ENCODE measurements at regions of chr7 and their contacts with region 1.

Region 1: DNA sequence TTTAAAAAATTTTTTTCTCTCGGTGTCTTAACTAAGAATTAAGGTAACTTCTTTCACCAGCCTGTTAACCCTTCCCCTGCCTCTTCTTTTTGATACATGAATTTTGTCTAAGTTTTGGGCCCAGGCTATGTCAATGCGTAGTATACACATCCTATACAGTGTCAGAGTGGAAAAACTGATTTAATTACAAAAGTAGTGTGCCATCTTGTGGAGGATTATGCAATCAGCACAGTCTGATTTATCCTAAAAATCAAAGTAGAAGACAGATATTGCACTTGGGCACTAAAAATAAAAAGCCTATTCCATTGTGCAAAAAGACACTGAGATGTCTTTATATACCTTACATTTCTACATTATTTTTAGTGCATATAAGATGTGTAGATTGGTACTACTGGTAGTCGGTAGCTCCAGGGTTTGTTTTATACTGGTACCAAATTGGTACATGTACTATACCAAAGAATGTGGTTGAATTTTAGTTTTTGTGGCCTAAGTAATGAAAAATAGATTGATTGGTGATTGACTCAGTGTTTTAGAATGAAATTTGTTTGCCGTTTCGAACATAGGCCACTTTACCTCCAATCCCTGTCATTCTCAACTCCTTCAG is 96.6 kb downstream of the MKLN1 start:
- DNase-seq: peak; percentile 75
- H3K4me3 ChIP-seq: no peak overlapping the region
- H3K27ac ChIP-seq: peak overlapping the region; percentile 2; the same call in 1 of the 2 replicates
- H3K4me1 ChIP-seq: no peaks in the 10 kb centered on the region
- H3K27me3 ChIP-seq: no peaks in the 10 kb centered on the region

Region 2: GRCh38 chr7:131090886-131091692 is 333.2 kb before region 1 on chr7:
- in situ Hi-C with region 1: loop called (anchors 10 kb)
- DNase-seq: no peak
- H3K4me3 ChIP-seq: no peak overlapping the region
- H3K27ac ChIP-seq: no peak overlapping the region
- H3K4me1 ChIP-seq: peaks cover 18% of the 10 kb centered on the region; the same call in 1 of the 2 replicates
- H3K27me3 ChIP-seq: no peaks in the 10 kb centered on the region

Region 3: GRCh38 chr7:131556052-131556908 is 132.0 kb after region 1 on chr7 and contains the start of gene PODXL:
- in situ Hi-C with region 1: no loop called
- DNase-seq: peak; percentile 82
- H3K4me3 ChIP-seq: peak within 1 kb of the TSS; percentile 80
- H3K27ac ChIP-seq: no peak within 1 kb of the TSS
- H3K4me1 ChIP-seq: peaks cover 43% of the 10 kb centered on the region
- H3K27me3 ChIP-seq: no peaks in the 10 kb centered on the region
- total RNA-seq, gene PODXL: 42.7 and 50.1 TPM in 2 replicates